ENCODE measurements at regions of chr12 and their contacts with region 1.

Region 1: DNA sequence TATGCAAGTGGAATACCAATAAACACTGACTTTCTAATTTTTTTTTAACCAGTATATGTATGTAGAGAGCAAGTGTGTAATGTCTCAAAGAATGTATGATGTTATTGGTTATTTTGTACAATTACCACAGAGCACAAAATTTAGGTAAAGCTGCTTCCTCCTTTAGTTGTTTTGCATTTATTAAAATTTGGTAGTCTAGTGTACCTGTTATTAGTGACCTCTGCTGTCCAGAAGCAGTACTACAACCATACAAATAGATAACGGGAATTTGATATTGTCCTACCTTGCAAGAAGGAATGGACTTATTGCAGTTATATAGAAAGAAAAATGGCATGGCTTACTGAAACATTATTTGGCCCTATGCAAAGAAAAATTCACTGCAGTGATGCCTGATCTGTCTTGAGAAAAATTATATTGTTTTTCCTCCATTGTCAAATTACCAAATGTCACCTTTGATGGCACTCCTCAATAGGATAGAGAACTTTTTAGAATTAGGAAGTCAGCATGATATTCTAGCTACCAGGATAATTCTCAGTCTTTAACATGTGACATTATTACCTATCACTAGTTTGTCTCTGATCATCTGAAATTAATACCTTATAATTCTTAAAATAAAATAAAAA is 153.9 kb upstream of the RMST start:
- DNase-seq: no peak
- H3K4me3 ChIP-seq: no peak overlapping the region
- H3K27ac ChIP-seq: no peak overlapping the region
- H3K4me1 ChIP-seq: no peaks in the 10 kb centered on the region
- H3K27me3 ChIP-seq: no peaks in the 10 kb centered on the region
- CTCF ChIP-seq: peak; percentile 71 to 86 (median 72)
- EP300 ChIP-seq: no peak
- POLR2A ChIP-seq: no peak

Region 2: DNA sequence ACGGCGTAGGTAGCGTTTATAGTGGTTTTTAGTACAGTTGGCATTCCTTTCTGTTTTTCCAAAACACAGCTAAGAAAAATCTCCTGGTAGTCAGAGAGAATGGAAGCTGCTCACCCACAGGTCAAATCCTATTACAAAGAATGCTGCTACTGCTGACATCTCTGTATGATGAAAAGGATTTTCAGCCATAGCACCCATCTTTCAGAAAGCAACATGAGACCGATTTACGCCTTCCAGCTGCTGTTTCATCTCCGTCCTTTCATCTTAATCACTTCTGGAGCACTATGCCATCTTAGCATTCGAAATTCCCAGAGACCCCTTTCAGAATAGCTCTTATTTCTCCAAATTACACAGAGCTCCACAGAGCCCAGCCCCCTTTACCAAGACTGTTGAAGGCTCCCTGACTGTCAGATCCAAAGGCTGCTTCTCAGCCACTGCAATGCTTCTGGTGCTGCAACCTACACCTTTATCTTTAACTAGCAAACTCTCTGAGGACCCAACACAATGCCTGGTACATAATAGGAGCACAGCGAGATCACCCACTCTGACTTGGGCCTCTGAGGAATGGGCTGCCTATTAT is 189.8 kb before region 1 on chr12:
- intact Hi-C with region 1: no loop called
- DNase-seq: no peak
- H3K4me3 ChIP-seq: no peak overlapping the region
- H3K27ac ChIP-seq: no peak overlapping the region
- H3K4me1 ChIP-seq: no peaks in the 10 kb centered on the region
- H3K27me3 ChIP-seq: no peaks in the 10 kb centered on the region
- CTCF ChIP-seq: no peak
- EP300 ChIP-seq: no peak
- POLR2A ChIP-seq: no peak

Region 3: DNA sequence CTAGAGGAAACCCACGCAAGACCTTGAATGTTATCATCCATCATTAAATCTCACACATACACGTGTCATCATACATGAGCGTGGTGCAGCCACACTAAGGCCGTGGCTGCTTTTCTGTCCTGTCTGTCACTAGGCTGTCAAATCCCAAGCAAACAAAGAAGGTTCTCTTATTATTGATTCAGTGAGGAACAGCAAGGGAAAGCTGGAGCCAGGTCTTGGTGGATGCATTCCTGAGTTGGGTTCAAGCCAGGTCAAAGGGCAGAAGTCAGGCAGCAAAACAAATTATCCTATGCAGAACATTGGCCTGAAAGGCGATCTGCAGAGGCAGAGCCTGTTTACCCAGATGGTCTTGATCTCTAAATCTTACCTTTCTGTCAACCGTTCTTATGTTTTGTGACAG is 149.3 kb before region 1 on chr12:
- intact Hi-C with region 1: loop called (anchors 10 kb)
- DNase-seq: no peak
- H3K4me3 ChIP-seq: no peak overlapping the region
- H3K27ac ChIP-seq: no peak overlapping the region
- H3K4me1 ChIP-seq: no peaks in the 10 kb centered on the region
- H3K27me3 ChIP-seq: no peaks in the 10 kb centered on the region
- CTCF ChIP-seq: no peak
- EP300 ChIP-seq: no peak
- POLR2A ChIP-seq: no peak